GM12878 (cell line): ENCODE measurements at regions of chr2 and their contacts with region 1.

Region 1: DNA sequence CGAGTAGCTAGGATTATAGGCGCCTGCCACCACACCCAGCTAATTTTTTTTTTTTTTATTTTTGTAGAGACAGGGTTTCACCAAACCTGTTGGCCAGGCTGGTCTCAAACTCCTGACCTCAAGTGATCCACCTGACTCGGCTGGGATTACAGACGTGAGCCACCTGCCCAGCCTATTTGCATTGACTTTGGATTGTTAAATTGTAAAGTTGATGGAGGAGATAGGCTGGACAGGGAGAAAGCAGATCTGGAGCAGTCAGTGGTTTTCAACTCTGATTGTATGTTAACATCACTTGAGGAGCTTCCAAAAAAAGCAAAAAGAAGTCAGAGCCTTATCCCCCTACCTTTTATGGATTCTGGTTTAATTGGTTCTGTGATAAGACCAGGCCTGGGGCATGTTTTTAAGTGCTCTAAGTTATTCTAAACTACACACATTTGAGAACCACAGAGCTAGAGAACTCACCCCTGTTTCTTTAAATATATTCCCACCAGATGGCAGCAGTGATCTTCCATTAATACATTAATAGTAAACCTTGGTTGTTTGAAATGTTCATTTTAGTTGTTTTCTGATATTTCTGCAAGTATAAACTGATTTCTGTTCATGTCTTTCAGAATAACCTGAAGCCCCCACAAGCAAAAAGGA is 7.5 kb downstream of the C2orf49 start:
- DNase-seq: no peak
- ATAC-seq: peak; percentile 66
- H3K4me3 ChIP-seq: no peak overlapping the region
- H3K27ac ChIP-seq: no peak overlapping the region
- H3K4me1 ChIP-seq: no peaks in the 10 kb centered on the region
- H3K27me3 ChIP-seq: no peaks in the 10 kb centered on the region
- CTCF ChIP-seq: peak in 2 of 3 experiments; percentile 33 to 37; a peak in 2 of 6 replicates
- EP300 ChIP-seq: no peak
- POLR2A ChIP-seq: no peak
- RAD21 ChIP-seq: 0 out of 2 replicates have a peak, but pooled peaks have one; percentile 3

Region 2: GRCh38 chr2:104583811-104584210 is 761.0 kb before region 1 on chr2:
- CTCF ChIA-PET with region 1: no interaction called
- POLR2A ChIA-PET with region 1: no interaction called
- RAD21 ChIA-PET with region 1: no interaction called
- SMC1A ChIA-PET with region 1: no interaction called
- in situ Hi-C with region 1: no loop called
- intact Hi-C with region 1: no loop called
- DNase-seq: no peak
- ATAC-seq: no peak
- H3K4me3 ChIP-seq: no peak overlapping the region
- H3K27ac ChIP-seq: no peak overlapping the region
- H3K4me1 ChIP-seq: no peaks in the 10 kb centered on the region
- H3K27me3 ChIP-seq: no peaks in the 10 kb centered on the region
- CTCF ChIP-seq: no peak
- EP300 ChIP-seq: no peak
- POLR2A ChIP-seq: no peak
- RAD21 ChIP-seq: no peak

Region 3: GRCh38 chr2:106193977-106194778 is 849.4 kb after region 1 on chr2 and contains the start of gene UXS1:
- CTCF ChIA-PET with region 1: no interaction called
- POLR2A ChIA-PET with region 1: no interaction called
- RAD21 ChIA-PET with region 1: no interaction called
- SMC1A ChIA-PET with region 1: no interaction called
- in situ Hi-C with region 1: loop called (anchors 10 kb)
- intact Hi-C with region 1: no loop called
- DNase-seq: peak; percentile 78
- ATAC-seq: peak; percentile 78
- H3K4me3 ChIP-seq: peak within 1 kb of the TSS; percentile 92
- H3K27ac ChIP-seq: peak within 1 kb of the TSS; percentile 69
- H3K4me1 ChIP-seq: peaks cover 9% of the 10 kb centered on the region
- H3K27me3 ChIP-seq: no peaks in the 10 kb centered on the region
- CTCF ChIP-seq: 0 out of 6 replicates have a peak, but pooled peaks of 1 of the 3 experiments have one; percentile 7
- EP300 ChIP-seq: no peak; a peak in 1 of 4 replicates
- POLR2A ChIP-seq: peak; percentile 92
- RAD21 ChIP-seq: no peak
- polyA plus RNA-seq, gene UXS1: 6.0 to 10.5 TPM